Natural killer cell (primary cell): ENCODE measurements at regions of chr11 and their contacts with region 1.

Region 1: GRCh38 chr11:115132436-115133228 is 371.6 kb downstream of the CADM1 start:
- DNase-seq: peak in 1 of 2 donors; percentile 3
- ATAC-seq: no peak
- H3K4me3 ChIP-seq: no peak overlapping the region
- H3K4me3 Mint-ChIP-seq: no peak overlapping the region
- H3K27ac ChIP-seq: no peak overlapping the region
- H3K27ac Mint-ChIP-seq: no peak overlapping the region
- H3K4me1 ChIP-seq: no peaks in the 10 kb centered on the region
- H3K4me1 Mint-ChIP-seq: no peaks in the 10 kb centered on the region
- H3K27me3 ChIP-seq: no peaks in the 10 kb centered on the region
- H3K27me3 Mint-ChIP-seq: no peaks in the 10 kb centered on the region
- CTCF ChIP-seq: no peak

Region 2: GRCh38 chr11:113376156-113376555 is 1756.5 kb before region 1 on chr11:
- intact Hi-C with region 1: loop called (anchors 10 kb)
- DNase-seq: no peak
- ATAC-seq: no peak
- H3K4me3 ChIP-seq: no peak overlapping the region
- H3K4me3 Mint-ChIP-seq: no peak overlapping the region
- H3K27ac ChIP-seq: peak overlapping the region; percentile 22
- H3K27ac Mint-ChIP-seq: no peak overlapping the region
- H3K4me1 ChIP-seq: no peaks in the 10 kb centered on the region
- H3K4me1 Mint-ChIP-seq: no peaks in the 10 kb centered on the region
- H3K27me3 ChIP-seq: no peaks in the 10 kb centered on the region
- H3K27me3 Mint-ChIP-seq: peaks cover 0 to 8% of the 10 kb centered on the region in 2 donors
- CTCF ChIP-seq: no peak

Region 3: GRCh38 chr11:114724916-114725524 is 407.6 kb before region 1 on chr11:
- intact Hi-C with region 1: no loop called
- DNase-seq: no peak
- ATAC-seq: no peak
- H3K4me3 ChIP-seq: no peak overlapping the region
- H3K4me3 Mint-ChIP-seq: no peak overlapping the region
- H3K27ac ChIP-seq: no peak overlapping the region
- H3K27ac Mint-ChIP-seq: no peak overlapping the region
- H3K4me1 ChIP-seq: no peaks in the 10 kb centered on the region
- H3K4me1 Mint-ChIP-seq: no peaks in the 10 kb centered on the region
- H3K27me3 ChIP-seq: no peaks in the 10 kb centered on the region
- H3K27me3 Mint-ChIP-seq: peaks cover 8 to 11% of the 10 kb centered on the region in 2 donors
- CTCF ChIP-seq: no peak

Region 4: DNA sequence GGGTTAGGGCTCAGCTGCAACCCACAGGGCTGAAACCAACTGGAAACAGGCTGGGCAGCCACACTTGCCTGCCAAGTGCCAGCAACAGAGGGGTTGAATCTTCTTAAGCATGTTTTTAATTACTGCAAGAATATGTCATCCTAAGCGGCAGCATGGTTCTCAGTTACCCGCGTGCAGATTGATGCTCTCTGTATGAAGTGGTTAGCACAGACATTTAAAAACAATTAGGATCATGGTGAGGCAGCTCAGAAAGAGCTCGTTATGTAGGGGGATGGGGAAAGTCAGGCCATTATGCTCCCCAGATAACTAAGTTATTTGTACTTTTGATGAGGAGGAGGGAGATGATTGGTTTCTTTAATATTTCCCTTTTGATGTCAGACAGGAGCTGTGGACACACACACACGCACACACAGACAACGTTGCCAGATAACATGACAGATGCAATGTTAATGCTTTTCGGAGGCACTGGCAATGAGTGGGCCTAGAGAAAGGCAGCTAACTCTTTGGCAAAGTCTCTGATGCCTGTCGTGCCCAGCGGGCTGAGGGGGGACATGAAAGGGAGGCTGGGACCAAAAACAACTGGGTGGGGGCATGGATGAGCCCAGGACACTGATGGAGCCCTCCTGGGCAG is 64.6 kb before region 1 on chr11:
- intact Hi-C with region 1: no loop called
- DNase-seq: no peak
- ATAC-seq: no peak
- H3K4me3 ChIP-seq: no peak overlapping the region
- H3K4me3 Mint-ChIP-seq: no peak overlapping the region
- H3K27ac ChIP-seq: no peak overlapping the region
- H3K27ac Mint-ChIP-seq: no peak overlapping the region
- H3K4me1 ChIP-seq: no peaks in the 10 kb centered on the region
- H3K4me1 Mint-ChIP-seq: no peaks in the 10 kb centered on the region
- H3K27me3 ChIP-seq: no peaks in the 10 kb centered on the region
- H3K27me3 Mint-ChIP-seq: peaks cover 0 to 3% of the 10 kb centered on the region in 2 donors
- CTCF ChIP-seq: no peak

Region 5: DNA sequence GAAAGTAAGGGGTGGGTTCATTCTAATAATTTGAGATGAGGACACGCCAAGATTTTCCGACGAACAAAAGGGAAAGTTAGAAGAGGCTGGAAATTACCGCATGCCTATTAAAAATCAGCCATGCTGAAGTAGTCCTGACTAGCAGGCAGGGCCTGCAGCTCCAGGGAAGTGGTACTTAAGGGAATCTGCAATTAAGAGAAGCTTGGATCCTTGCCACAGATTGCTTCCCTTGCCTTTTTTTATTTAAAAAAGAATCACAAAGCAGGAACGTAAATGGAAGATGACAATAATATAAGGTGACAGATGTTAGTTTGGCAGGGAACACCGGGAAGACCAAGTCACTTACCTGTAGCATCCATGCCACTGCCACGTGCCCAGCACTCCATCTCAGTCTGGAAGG is 12.3 kb after region 1 on chr11:
- intact Hi-C with region 1: no loop called
- DNase-seq: no peak
- ATAC-seq: no peak
- H3K4me3 ChIP-seq: no peak overlapping the region
- H3K4me3 Mint-ChIP-seq: no peak overlapping the region
- H3K27ac ChIP-seq: no peak overlapping the region
- H3K27ac Mint-ChIP-seq: no peak overlapping the region
- H3K4me1 ChIP-seq: peaks cover 5% of the 10 kb centered on the region
- H3K4me1 Mint-ChIP-seq: peaks cover 0 to 9% of the 10 kb centered on the region in 2 donors
- H3K27me3 ChIP-seq: no peaks in the 10 kb centered on the region
- H3K27me3 Mint-ChIP-seq: peaks cover 8 to 10% of the 10 kb centered on the region in 2 donors
- CTCF ChIP-seq: no peak